ENCODE measurements at regions of chr11 and their contacts with region 1.

Region 1: GRCh38 chr11:12717851-12718291 is 43.6 kb downstream of the TEAD1 start:
- DNase-seq: peak; percentile 88
- H3K4me3 Mint-ChIP-seq: no peak overlapping the region
- H3K27ac Mint-ChIP-seq: no peak overlapping the region
- H3K4me1 Mint-ChIP-seq: peaks cover 15% of the 10 kb centered on the region
- H3K27me3 Mint-ChIP-seq: peaks cover 63% of the 10 kb centered on the region

Region 2: DNA sequence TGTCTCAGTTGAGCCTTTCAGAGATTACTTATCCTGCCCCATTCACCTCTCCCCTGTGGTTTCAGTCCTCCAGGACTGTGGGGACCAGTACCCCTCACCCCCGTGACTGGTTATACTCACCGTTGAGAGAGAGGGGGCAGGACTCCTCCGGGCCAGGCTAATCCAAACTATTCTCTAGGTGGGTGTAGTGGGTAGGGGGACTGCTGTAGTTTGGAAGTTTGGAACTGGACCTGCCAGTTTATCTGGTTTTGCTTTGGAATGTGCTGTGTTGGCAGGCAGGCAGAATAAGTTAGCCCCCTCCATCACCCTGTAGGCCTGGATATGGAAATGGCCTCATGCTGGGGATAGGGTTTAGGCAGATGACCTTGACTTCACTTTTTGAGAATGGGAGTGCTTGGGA is 30.1 kb before region 1 on chr11:
- CTCF ChIA-PET with region 1: interaction called, 3 read pairs
- intact Hi-C with region 1: loop called (anchors 2 kb)
- DNase-seq: no peak
- H3K4me3 Mint-ChIP-seq: no peak overlapping the region
- H3K27ac Mint-ChIP-seq: no peak overlapping the region
- H3K4me1 Mint-ChIP-seq: peaks cover 16% of the 10 kb centered on the region
- H3K27me3 Mint-ChIP-seq: peaks cover 70% of the 10 kb centered on the region

Region 3: GRCh38 chr11:12693479-12694181 is 24.2 kb before region 1 on chr11:
- CTCF ChIA-PET with region 1: no interaction called
- intact Hi-C with region 1: loop called (anchors 1 kb)
- DNase-seq: peak; percentile 57
- H3K4me3 Mint-ChIP-seq: no peak overlapping the region
- H3K27ac Mint-ChIP-seq: no peak overlapping the region
- H3K4me1 Mint-ChIP-seq: peaks cover 21% of the 10 kb centered on the region
- H3K27me3 Mint-ChIP-seq: peaks cover 73% of the 10 kb centered on the region

Region 4: DNA sequence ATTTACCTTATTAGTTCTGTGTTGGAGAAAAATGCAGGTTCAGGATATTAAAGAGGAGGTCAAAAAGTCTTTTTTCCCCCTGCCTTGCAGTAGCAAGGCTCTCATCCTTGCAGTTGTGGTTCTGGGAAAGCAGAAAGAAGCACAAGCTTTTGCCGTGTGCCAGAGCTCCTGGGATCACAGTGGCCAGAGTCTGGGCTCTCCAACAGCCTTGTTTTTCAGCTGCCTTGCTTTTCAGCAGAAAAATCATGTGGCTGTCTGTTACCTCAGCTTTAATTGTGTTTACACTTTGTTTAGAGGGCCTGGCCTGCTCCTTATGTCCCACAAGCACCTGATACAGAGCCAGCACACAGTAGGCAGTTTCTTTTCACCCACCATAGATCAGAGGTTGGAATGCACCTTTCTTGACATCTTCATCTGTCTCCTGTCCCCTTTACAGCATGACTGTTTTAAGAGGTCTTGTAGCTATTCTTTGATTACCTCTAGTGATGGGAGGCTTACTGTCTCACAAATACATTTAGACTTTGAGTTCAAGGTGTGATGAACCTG is 23.9 kb after region 1 on chr11:
- CTCF ChIA-PET with region 1: no interaction called
- intact Hi-C with region 1: no loop called
- DNase-seq: no peak
- H3K4me3 Mint-ChIP-seq: no peak overlapping the region
- H3K27ac Mint-ChIP-seq: no peak overlapping the region
- H3K4me1 Mint-ChIP-seq: no peaks in the 10 kb centered on the region
- H3K27me3 Mint-ChIP-seq: peaks cover 12% of the 10 kb centered on the region

Region 5: GRCh38 chr11:12787847-12788246 is 70.0 kb after region 1 on chr11:
- CTCF ChIA-PET with region 1: no interaction called
- intact Hi-C with region 1: no loop called
- DNase-seq: no peak
- H3K4me3 Mint-ChIP-seq: no peak overlapping the region
- H3K27ac Mint-ChIP-seq: no peak overlapping the region
- H3K4me1 Mint-ChIP-seq: no peaks in the 10 kb centered on the region
- H3K27me3 Mint-ChIP-seq: peaks cover 10% of the 10 kb centered on the region

Region 6: GRCh38 chr11:12813371-12814225 is 95.7 kb after region 1 on chr11:
- CTCF ChIA-PET with region 1: no interaction called
- intact Hi-C with region 1: loop called (anchors 2 kb)
- DNase-seq: no peak
- H3K4me3 Mint-ChIP-seq: no peak overlapping the region
- H3K27ac Mint-ChIP-seq: no peak overlapping the region
- H3K4me1 Mint-ChIP-seq: peaks cover 4% of the 10 kb centered on the region
- H3K27me3 Mint-ChIP-seq: peaks cover 50% of the 10 kb centered on the region

Region 7: GRCh38 chr11:12853652-12854296 is 135.9 kb after region 1 on chr11:
- CTCF ChIA-PET with region 1: no interaction called
- intact Hi-C with region 1: no loop called
- DNase-seq: no peak
- H3K4me3 Mint-ChIP-seq: no peak overlapping the region
- H3K27ac Mint-ChIP-seq: no peak overlapping the region
- H3K4me1 Mint-ChIP-seq: peaks cover 5% of the 10 kb centered on the region
- H3K27me3 Mint-ChIP-seq: peaks cover 9% of the 10 kb centered on the region

Region 8: GRCh38 chr11:12950681-12951080 is 232.8 kb after region 1 on chr11:
- CTCF ChIA-PET with region 1: no interaction called
- intact Hi-C with region 1: no loop called
- DNase-seq: no peak
- H3K4me3 Mint-ChIP-seq: no peak overlapping the region
- H3K27ac Mint-ChIP-seq: no peak overlapping the region
- H3K4me1 Mint-ChIP-seq: no peaks in the 10 kb centered on the region
- H3K27me3 Mint-ChIP-seq: peaks cover 13% of the 10 kb centered on the region

Measured in activated naive CD4-positive, alpha-beta T cell treated with anti-CD3 and anti-CD28 coated beads for 36 hours (primary cell).